ENCODE measurements at regions of chr18 and their contacts with region 1.

Region 1: DNA sequence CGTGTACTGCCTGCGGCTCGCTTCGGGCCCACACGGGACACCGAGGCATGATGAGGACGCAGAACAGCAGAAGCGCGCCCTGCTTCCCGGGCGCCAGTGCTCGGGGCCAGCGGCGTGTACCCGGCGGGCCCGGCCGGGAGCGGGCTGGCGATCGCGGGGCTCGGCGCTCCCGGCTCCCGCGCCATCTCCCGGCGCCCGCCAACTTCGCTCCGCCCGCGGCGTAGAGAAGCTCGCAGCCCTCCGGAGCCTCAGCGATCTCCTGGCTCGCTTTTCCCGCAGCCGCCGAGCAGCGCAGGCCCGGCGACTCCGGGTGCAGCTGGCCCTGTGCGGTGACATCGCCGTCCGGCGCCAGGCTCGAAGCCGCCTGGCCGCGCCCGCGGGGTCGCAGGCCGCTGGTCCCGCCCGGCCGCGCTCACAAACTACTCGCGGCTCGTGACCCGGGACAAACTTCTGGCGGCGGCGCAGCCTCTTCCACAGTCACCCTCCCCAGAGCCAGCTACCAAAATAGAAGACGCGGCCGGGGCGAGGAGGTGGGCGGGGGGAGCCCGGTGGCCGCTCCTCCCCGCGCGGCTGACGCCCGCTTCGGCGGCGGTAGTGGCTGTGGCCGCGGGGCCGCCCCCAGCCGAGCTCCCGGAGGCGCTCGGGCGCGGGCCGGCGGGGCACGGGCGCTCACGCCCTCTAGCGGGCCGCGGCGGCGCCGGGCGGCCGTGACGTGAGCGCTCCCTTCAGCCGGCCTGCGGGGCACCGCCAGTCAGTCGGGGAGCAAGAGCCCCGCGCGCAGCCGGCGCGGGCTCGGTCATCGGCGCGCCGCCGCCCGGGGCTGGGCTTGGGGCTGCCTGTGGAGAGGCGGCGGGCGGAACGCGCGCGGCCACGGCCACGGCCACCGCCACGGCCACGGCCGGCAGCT is at the start of gene PTPRM:
- DNase-seq: peak; percentile 54
- H3K4me3 Mint-ChIP-seq: peak within 1 kb of the TSS; percentile 10
- H3K27ac Mint-ChIP-seq: no peak within 1 kb of the TSS
- H3K4me1 Mint-ChIP-seq: no peaks in the 10 kb centered on the region
- H3K27me3 Mint-ChIP-seq: peaks cover 50% of the 10 kb centered on the region
- total RNA-seq, gene PTPRM: 4.3 to 6.1 TPM

Region 2: GRCh38 chr18:7221424-7222155 is 345.2 kb before region 1 on chr18:
- CTCF ChIA-PET with region 1: no interaction called
- intact Hi-C with region 1: loop called (anchors 2 kb)
- DNase-seq: peak; percentile 24
- H3K4me3 Mint-ChIP-seq: no peak overlapping the region
- H3K27ac Mint-ChIP-seq: no peak overlapping the region
- H3K4me1 Mint-ChIP-seq: no peaks in the 10 kb centered on the region
- H3K27me3 Mint-ChIP-seq: no peaks in the 10 kb centered on the region

Region 3: DNA sequence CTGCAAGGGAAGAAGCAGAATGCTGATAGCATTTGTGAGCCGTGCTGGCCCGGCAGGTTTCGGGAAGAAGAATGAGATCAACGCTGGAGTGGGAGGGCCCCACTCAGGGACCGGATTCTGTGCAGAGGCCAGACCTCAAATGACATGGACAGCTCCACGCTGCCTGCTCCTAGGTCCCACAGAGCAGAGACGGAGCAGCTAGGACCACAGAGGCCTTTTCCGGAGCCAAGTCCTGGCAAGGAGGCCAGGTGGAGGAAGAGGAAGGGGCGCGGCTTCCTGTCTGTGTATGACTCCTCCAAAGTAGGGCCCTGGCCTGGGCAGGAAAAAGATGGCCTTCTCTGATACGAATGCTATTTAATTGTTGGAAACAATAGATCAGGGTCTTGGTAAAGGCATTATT is 196.0 kb before region 1 on chr18:
- CTCF ChIA-PET with region 1: no interaction called
- intact Hi-C with region 1: no loop called
- DNase-seq: no peak
- H3K4me3 Mint-ChIP-seq: no peak overlapping the region
- H3K27ac Mint-ChIP-seq: no peak overlapping the region
- H3K4me1 Mint-ChIP-seq: no peaks in the 10 kb centered on the region
- H3K27me3 Mint-ChIP-seq: no peaks in the 10 kb centered on the region

Region 4: GRCh38 chr18:7950380-7951143 is 383.7 kb after region 1 on chr18:
- CTCF ChIA-PET with region 1: no interaction called
- intact Hi-C with region 1: loop called (anchors 10 kb)
- DNase-seq: peak; percentile 16
- H3K4me3 Mint-ChIP-seq: no peak overlapping the region
- H3K27ac Mint-ChIP-seq: no peak overlapping the region
- H3K4me1 Mint-ChIP-seq: peaks cover 15% of the 10 kb centered on the region
- H3K27me3 Mint-ChIP-seq: no peaks in the 10 kb centered on the region

Measured in activated naive CD4-positive, alpha-beta T cell treated with anti-CD3 and anti-CD28 coated beads for 36 hours (primary cell).